ENCODE measurements at regions of chr10 and their contacts with region 1.

Region 1: GRCh38 chr10:61882621-61883373 is 18.7 kb upstream of the ARID5B start:
- DNase-seq: peak; percentile 84
- H3K4me3 Mint-ChIP-seq: peak overlapping the region; percentile 47
- H3K27ac Mint-ChIP-seq: peak overlapping the region; percentile 77
- H3K4me1 Mint-ChIP-seq: peaks cover 30% of the 10 kb centered on the region
- H3K27me3 Mint-ChIP-seq: no peaks in the 10 kb centered on the region

Region 2: DNA sequence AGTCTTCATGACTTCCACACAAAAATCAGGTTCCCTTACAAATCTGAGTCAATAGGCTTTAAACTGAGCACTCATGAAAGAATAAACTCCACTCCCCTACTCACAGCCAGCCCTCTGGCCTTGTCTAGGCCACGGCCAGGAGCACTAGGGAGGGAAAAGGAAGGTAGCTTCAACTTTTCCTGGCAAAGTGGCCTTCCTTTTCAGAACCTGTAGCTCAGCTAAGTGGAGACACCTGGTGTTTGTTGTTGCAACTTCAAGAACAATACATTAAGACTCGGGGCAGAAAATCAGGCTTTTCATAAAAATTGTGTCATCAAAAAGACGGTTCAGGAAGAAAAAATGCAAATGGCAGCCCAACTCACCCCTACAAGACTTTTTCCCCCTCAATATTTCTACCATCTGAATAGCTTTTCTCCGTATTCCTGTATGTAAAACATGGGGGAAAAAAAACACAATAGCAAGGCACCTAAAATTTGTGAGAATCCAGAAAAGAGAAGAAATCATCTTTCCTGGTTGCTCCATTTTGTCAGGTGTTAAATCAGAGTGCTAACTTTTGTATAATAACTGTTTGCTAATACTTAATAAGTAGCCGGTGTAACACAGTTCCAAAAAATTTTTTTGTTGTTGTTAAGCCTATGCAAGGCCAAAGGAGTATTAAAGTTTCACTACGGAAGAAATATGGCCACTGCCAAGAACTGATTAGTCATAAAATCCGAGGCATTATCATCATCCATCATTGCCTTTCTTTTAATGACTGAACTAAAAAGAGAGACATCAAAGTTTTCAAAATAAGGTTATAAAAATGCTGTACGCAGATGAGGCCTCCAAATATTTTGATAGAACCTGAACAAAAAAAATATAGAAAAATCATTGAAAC is 47.5 kb before region 1 on chr10:
- CTCF ChIA-PET with region 1: interaction called, 3 read pairs
- POLR2A ChIA-PET with region 1: no interaction called
- intact Hi-C with region 1: loop called (anchors 1 kb)
- DNase-seq: no peak
- H3K4me3 Mint-ChIP-seq: no peak overlapping the region
- H3K27ac Mint-ChIP-seq: no peak overlapping the region
- H3K4me1 Mint-ChIP-seq: peaks cover 23% of the 10 kb centered on the region
- H3K27me3 Mint-ChIP-seq: no peaks in the 10 kb centered on the region

Region 3: GRCh38 chr10:61857746-61858145 is 25.1 kb before region 1 on chr10:
- CTCF ChIA-PET with region 1: no interaction called
- POLR2A ChIA-PET with region 1: no interaction called
- intact Hi-C with region 1: no loop called
- DNase-seq: no peak
- H3K4me3 Mint-ChIP-seq: no peak overlapping the region
- H3K27ac Mint-ChIP-seq: no peak overlapping the region
- H3K4me1 Mint-ChIP-seq: no peaks in the 10 kb centered on the region
- H3K27me3 Mint-ChIP-seq: no peaks in the 10 kb centered on the region

Region 4: GRCh38 chr10:61869774-61870525 is 12.8 kb before region 1 on chr10:
- CTCF ChIA-PET with region 1: interaction called, 4 read pairs
- POLR2A ChIA-PET with region 1: interaction called, 3 read pairs
- intact Hi-C with region 1: loop called (anchors 1 kb)
- DNase-seq: no peak
- H3K4me3 Mint-ChIP-seq: no peak overlapping the region
- H3K27ac Mint-ChIP-seq: no peak overlapping the region
- H3K4me1 Mint-ChIP-seq: peaks cover 13% of the 10 kb centered on the region
- H3K27me3 Mint-ChIP-seq: no peaks in the 10 kb centered on the region

Region 5: GRCh38 chr10:61896854-61897661 is 14.3 kb after region 1 on chr10:
- CTCF ChIA-PET with region 1: interaction called, 9 read pairs
- POLR2A ChIA-PET with region 1: no interaction called
- intact Hi-C with region 1: loop called (anchors 1 kb)
- DNase-seq: peak; percentile 70
- H3K4me3 Mint-ChIP-seq: peak overlapping the region; percentile 66
- H3K27ac Mint-ChIP-seq: peak overlapping the region; percentile 95
- H3K4me1 Mint-ChIP-seq: peaks cover 43% of the 10 kb centered on the region
- H3K27me3 Mint-ChIP-seq: no peaks in the 10 kb centered on the region